CD8-positive, alpha-beta T cell (primary cell): ENCODE measurements at regions of chr6 and their contacts with region 1.

Region 1: DNA sequence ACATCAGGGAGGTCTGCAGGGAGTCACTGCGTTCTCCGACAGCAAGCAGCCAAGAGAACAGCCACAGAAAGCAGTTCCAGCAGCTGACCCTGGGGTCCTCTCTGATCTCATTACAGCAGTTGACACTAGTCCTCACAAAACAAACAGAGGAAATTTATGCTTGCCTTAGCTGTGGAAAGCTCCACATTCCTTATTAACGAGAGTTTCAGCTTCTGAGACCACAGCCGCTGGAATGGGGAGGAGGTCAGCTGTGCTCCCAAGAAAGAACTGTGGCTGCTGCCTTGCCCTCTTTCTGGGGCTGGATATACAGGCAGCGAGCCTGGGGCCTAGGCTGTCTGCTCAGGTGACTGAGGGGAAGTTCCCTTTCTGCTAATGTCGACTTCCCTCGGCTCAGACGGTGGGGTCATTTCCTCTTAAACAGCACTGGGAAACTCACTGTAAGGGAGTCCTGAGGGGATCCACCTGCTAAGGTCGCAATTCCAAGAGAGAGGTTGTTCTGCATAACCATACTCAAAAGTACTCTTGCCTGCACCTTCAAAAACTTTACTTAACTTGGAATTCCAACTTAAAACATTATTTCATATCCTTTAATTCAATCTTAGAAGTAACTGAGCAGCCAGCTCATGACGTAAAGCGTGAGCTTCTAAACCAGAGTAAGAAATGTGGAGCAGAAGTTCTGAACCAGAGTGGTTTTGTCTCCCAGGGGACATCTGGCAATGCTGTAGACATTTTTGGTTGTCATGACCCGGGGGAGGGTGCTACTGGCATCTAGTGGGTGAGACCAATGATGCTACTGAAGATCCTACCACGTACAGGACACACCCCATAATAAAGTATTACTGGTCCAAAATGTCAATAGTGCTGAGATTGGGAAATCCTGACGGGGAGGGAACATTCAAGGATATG is 80.3 kb downstream of the BACH2 start:
- DNase-seq: peak in 7 of 9 experiments; percentile 21 to 84 (median 62)
- ATAC-seq: peak; percentile 29
- H3K4me3 ChIP-seq: peak overlapping the region in 1 of 2 experiments; percentile 16
- H3K4me3 Mint-ChIP-seq: peak overlapping the region; percentile 21
- H3K27ac ChIP-seq: peak overlapping the region; percentile 39 to 71
- H3K27ac Mint-ChIP-seq: no peak overlapping the region
- H3K4me1 ChIP-seq: peaks cover 100% of the 10 kb centered on the region
- H3K4me1 Mint-ChIP-seq: peaks cover 31% of the 10 kb centered on the region
- H3K27me3 ChIP-seq: no peaks in the 10 kb centered on the region
- H3K27me3 Mint-ChIP-seq: no peaks in the 10 kb centered on the region
- CTCF ChIP-seq: no peak

Region 2: GRCh38 chr6:89347825-89348224 is 868.5 kb before region 1 on chr6:
- CTCF ChIA-PET with region 1: no interaction called
- POLR2A ChIA-PET with region 1: no interaction called
- intact Hi-C with region 1: no loop called
- DNase-seq: no peak
- ATAC-seq: no peak
- H3K4me3 ChIP-seq: no peak overlapping the region
- H3K4me3 Mint-ChIP-seq: no peak overlapping the region
- H3K27ac ChIP-seq: no peak overlapping the region
- H3K27ac Mint-ChIP-seq: peak overlapping the region; percentile 67
- H3K4me1 ChIP-seq: peaks cover 23% of the 10 kb centered on the region
- H3K4me1 Mint-ChIP-seq: peaks cover 62% of the 10 kb centered on the region
- H3K27me3 ChIP-seq: no peaks in the 10 kb centered on the region
- H3K27me3 Mint-ChIP-seq: no peaks in the 10 kb centered on the region
- CTCF ChIP-seq: no peak

Region 3: DNA sequence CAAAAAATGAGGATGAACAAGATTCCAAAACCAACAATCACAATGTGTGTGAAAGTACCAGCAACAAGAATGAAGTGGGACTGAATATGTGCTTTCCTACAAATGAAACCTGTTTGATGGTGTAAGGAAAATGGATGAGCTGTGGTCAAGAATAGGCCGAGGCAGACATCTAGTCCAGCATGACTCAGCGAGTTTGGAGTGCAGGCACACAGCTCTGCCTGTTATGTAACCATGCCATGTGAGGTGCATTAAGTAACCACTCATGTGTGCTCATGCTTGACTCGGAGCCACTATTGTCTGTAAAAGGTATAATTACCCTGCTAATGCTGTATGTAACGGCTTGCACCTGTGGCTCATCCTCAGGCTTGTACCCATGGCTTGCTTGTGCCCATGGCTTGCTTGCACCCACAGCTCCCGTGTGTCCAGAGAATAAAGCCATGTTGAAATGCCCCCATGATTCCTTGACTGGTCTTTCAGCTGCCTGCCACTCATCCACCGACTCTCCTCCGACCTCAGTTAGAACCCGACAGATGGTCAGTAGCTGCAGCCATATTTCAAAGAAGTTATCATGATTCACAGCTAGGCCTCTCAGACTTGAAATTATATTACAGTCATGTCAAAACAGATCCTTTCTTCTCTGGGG is 18.4 kb before region 1 on chr6:
- CTCF ChIA-PET with region 1: interaction called, 4 read pairs
- POLR2A ChIA-PET with region 1: interaction called, 5 read pairs
- intact Hi-C with region 1: loop called in 1 of 2 experiments (anchors 2 kb)
- DNase-seq: no peak
- ATAC-seq: no peak
- H3K4me3 ChIP-seq: no peak overlapping the region
- H3K4me3 Mint-ChIP-seq: no peak overlapping the region
- H3K27ac ChIP-seq: no peak overlapping the region
- H3K27ac Mint-ChIP-seq: peak overlapping the region; percentile 87
- H3K4me1 ChIP-seq: peaks cover 74% of the 10 kb centered on the region
- H3K4me1 Mint-ChIP-seq: peaks cover 76% of the 10 kb centered on the region
- H3K27me3 ChIP-seq: no peaks in the 10 kb centered on the region
- H3K27me3 Mint-ChIP-seq: no peaks in the 10 kb centered on the region
- CTCF ChIP-seq: no peak

Region 4: GRCh38 chr6:90230548-90231215 is 14.4 kb after region 1 on chr6:
- CTCF ChIA-PET with region 1: interaction called, 6 read pairs
- POLR2A ChIA-PET with region 1: interaction called, 7 read pairs
- intact Hi-C with region 1: loop called (anchors 1 to 2 kb)
- DNase-seq: no peak
- ATAC-seq: no peak
- H3K4me3 ChIP-seq: no peak overlapping the region
- H3K4me3 Mint-ChIP-seq: peak overlapping the region; percentile 45
- H3K27ac ChIP-seq: peak overlapping the region in 1 of 2 experiments; percentile 32
- H3K27ac Mint-ChIP-seq: peak overlapping the region; percentile 95
- H3K4me1 ChIP-seq: peaks cover 95% of the 10 kb centered on the region
- H3K4me1 Mint-ChIP-seq: peaks cover 92% of the 10 kb centered on the region
- H3K27me3 ChIP-seq: no peaks in the 10 kb centered on the region
- H3K27me3 Mint-ChIP-seq: no peaks in the 10 kb centered on the region
- CTCF ChIP-seq: no peak

Region 5: DNA sequence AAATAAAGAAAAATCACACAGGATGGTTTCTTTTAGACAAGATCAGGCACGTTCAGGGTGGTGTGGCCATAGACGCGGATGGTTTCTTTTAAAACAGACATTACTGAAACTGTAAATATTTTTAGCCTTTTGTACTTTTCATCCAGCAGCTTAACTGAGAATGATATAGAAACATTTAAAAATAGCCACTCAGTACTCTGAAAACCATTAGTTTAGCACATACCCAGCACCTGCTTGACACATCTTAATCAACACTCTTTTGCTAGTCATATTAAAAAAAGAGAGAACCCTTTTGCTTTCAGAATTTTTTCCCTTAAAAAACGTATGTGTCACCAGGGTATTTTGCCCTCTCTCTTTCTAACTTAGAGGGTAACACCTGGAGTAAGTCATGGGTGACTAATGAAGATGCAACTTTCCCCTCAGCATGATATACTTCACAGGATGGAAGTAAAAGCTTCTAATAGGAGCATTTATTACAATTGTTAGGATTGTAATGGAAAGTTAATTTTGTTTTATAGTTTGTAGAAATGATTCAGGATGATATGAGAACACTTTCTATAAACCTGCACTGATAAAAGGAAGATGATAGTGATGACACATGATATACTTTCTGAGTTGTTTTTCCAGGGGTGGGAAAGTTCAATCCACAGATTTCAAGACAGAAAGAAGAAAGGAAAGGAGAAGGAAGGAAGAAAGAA is 35.1 kb after region 1 on chr6:
- CTCF ChIA-PET with region 1: no interaction called
- POLR2A ChIA-PET with region 1: interaction called, 4 read pairs
- intact Hi-C with region 1: loop called in 1 of 2 experiments (anchors 2 kb)
- DNase-seq: no peak
- ATAC-seq: peak; percentile 21
- H3K4me3 ChIP-seq: no peak overlapping the region
- H3K4me3 Mint-ChIP-seq: no peak overlapping the region
- H3K27ac ChIP-seq: no peak overlapping the region
- H3K27ac Mint-ChIP-seq: peak overlapping the region; percentile 75
- H3K4me1 ChIP-seq: peaks cover 73% of the 10 kb centered on the region
- H3K4me1 Mint-ChIP-seq: peaks cover 78% of the 10 kb centered on the region
- H3K27me3 ChIP-seq: no peaks in the 10 kb centered on the region
- H3K27me3 Mint-ChIP-seq: no peaks in the 10 kb centered on the region
- CTCF ChIP-seq: no peak

Region 6: GRCh38 chr6:90285611-90286381 is 69.5 kb after region 1 on chr6:
- CTCF ChIA-PET with region 1: interaction called, 3 read pairs
- POLR2A ChIA-PET with region 1: interaction called, 3 read pairs
- intact Hi-C with region 1: loop called in 1 of 2 experiments (anchors 5 kb)
- DNase-seq: peak in 5 of 9 experiments; percentile 46 to 77 (median 64)
- ATAC-seq: peak; percentile 46
- H3K4me3 ChIP-seq: peak overlapping the region; percentile 30 to 62
- H3K4me3 Mint-ChIP-seq: peak overlapping the region; percentile 83
- H3K27ac ChIP-seq: peak overlapping the region; percentile 1 to 74
- H3K27ac Mint-ChIP-seq: peak overlapping the region; percentile 93
- H3K4me1 ChIP-seq: peaks cover 93% of the 10 kb centered on the region
- H3K4me1 Mint-ChIP-seq: peaks cover 90% of the 10 kb centered on the region
- H3K27me3 ChIP-seq: no peaks in the 10 kb centered on the region
- H3K27me3 Mint-ChIP-seq: no peaks in the 10 kb centered on the region
- CTCF ChIP-seq: no peak